Heart left ventricle (tissue), 16 donors: ENCODE measurements at regions of chr6 and their contacts with region 1.

Region 1: GRCh38 chr6:85756982-85757381 is 114.3 kb upstream of the SYNCRIP start:
- DNase-seq: no peak
- ATAC-seq: no peak
- H3K4me3 ChIP-seq: no peak overlapping the region
- H3K27ac ChIP-seq: no peak overlapping the region
- H3K4me1 ChIP-seq: no peaks in the 10 kb centered on the region
- H3K27me3 ChIP-seq: no peaks in the 10 kb centered on the region
- CTCF ChIP-seq: peak; percentile 18 to 56 (median 41)
- POLR2A ChIP-seq: no peak

Region 2: DNA sequence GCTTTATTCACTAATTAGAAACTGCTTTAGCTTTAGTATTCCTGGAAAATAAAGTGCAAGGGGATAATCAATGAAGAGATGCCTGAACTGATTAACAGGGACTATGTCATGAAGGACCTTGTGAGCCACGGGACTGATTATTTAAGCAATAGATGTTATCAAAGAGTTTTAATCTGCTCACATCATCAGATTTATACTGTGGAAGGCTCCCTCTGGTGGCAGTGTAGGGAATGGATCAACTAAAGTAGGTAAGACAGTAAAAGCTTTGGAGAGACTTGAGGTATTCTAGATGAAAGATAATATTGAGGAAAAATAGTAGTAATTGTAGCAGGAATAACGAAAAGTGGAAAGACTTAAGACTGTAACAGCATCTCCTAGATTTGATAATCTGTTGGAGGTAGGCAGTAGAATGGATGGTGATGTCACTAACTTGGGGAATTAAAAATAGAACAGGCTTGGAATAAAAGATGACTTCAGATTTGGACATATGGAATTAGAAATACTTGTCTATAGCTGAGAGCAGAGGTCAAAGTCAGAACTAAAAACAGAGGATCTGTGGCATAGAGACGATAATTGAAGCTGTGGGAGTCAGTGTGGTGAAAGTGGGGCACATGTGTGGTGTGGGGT is 1100.1 kb after region 1 on chr6:
- intact Hi-C with region 1: loop called in 7 of 10 experiments (anchors 2 to 10 kb)
- DNase-seq: peak in 1 of 5 donors; percentile 26
- ATAC-seq: no peak
- H3K4me3 ChIP-seq: no peak overlapping the region
- H3K27ac ChIP-seq: no peak overlapping the region
- H3K4me1 ChIP-seq: no peaks in the 10 kb centered on the region
- H3K27me3 ChIP-seq: no peaks in the 10 kb centered on the region
- CTCF ChIP-seq: peak; percentile 49 to 74 (median 62)
- POLR2A ChIP-seq: no peak

Region 3: GRCh38 chr6:86937219-86938079 is 1180.5 kb after region 1 on chr6 and contains the start of gene HTR1E:
- intact Hi-C with region 1: loop called in 2 of 10 experiments (anchors 10 kb)
- DNase-seq: peak in 4 of 5 donors; percentile 11 to 42 (median 26)
- ATAC-seq: peak in 3 of 4 donors; percentile 58 to 68 (median 67)
- H3K4me3 ChIP-seq: peak within 1 kb of the TSS in 8 of 12 donors; percentile 5 to 33 (median 24)
- H3K27ac ChIP-seq: no peak within 1 kb of the TSS
- H3K4me1 ChIP-seq: peaks cover 0 to 12% (median 0%) of the 10 kb centered on the region in 12 donors
- H3K27me3 ChIP-seq: peaks cover 8 to 44% (median 31%) of the 10 kb centered on the region in 9 donors
- CTCF ChIP-seq: peak in 10 of 12 donors; percentile 26 to 60 (median 38)
- POLR2A ChIP-seq: no peak
- total RNA-seq, gene HTR1E: not detected